A549 (cell line): ENCODE measurements at regions of chr12 and their contacts with region 1.

Region 1: DNA sequence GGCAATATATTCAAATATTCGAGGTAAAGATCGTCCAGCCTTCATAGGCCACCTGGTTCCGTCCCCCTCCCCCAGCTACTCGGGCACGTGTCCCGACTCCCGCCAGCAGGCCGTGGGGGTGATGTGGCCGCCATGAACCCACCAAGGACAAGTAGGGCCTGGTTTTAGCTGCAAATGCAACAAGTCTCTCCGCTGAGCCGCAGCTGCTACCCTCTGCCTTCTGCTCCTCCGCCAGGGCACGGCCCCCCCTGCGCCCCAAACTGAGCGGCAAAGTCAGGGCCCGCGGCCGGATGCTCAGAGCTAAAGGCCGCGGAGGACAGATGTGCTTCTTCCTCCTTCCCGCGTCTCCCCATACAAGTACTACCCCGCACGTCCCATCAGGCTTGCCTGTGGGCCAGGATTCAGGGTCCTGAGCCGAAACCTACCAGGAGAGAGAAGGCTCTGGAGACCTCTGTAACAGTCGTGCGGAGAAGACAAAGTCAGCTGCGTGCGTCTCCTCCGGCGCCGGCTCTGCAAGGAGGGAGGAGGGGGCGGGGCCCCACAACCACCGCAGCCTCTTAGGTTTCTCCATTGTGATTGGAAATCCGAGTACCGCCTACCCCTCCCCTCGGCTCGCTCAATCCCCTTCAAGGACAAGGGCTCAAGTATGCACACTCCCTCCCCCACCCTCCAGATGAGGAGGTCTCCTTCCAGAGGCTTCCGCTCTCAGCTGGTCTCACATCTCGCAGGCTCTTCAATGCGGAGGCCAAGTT is at the start of gene LDHB:
- DNase-seq: peak; percentile 86 to 98
- ATAC-seq: peak; percentile 97 to 98
- H3K4me3 ChIP-seq: peak within 1 kb of the TSS; percentile 92
- H3K27ac ChIP-seq: peak within 1 kb of the TSS; percentile 97 to 98
- H3K4me1 ChIP-seq: peaks cover 34% of the 10 kb centered on the region
- CTCF ChIP-seq: no peak
- EP300 ChIP-seq: no peak
- POLR2A ChIP-seq: peak; percentile 90
- RAD21 ChIP-seq: no peak
- polyA plus RNA-seq, gene LDHB: 1,881 and 2,260 TPM in 2 replicates

Region 2: DNA sequence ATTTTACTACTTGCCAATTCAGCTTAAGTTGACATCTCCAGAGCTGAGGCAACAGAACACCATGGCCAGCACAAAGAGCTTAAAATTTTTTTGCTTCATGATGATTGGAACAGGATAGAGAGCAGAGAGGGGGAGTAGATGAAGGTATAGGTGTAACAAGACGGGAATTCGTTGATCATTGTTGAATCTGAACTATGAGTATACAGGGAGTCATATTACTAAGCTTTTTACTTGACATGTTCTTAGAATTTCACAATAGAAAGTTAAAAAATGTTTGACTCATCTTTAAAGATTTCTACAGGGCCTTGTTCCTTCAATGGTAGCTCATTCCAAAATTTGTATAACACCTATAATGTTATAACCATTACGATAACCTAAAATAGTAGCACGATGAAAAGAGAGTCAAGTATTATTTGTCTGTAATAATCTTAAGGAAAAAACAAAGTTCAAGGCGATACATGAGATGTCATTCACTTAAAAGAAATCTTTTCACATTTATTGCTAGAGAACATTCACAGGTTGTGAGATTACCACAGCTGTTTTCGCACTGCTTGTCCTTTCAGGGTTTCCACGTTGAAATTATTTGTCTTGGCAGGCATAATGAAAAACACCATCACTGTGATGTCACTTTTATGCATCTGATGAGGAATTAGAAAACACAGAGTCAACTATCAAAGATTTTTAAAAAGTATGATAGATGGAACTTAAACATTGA is 97.5 kb before region 1 on chr12:
- CTCF ChIA-PET with region 1: no interaction called
- POLR2A ChIA-PET with region 1: interaction called, 10 read pairs
- DNase-seq: peak; percentile 19 to 74
- ATAC-seq: peak; percentile 92 to 97
- H3K4me3 ChIP-seq: no peak overlapping the region
- H3K27ac ChIP-seq: peak overlapping the region; percentile 63 to 78; a peak in 5 of 6 replicates
- H3K4me1 ChIP-seq: peaks cover 54% of the 10 kb centered on the region
- CTCF ChIP-seq: no peak
- EP300 ChIP-seq: peak in 1 of 2 experiments; percentile 49; a peak in 2 of 5 replicates
- POLR2A ChIP-seq: no peak
- RAD21 ChIP-seq: no peak; a peak in 1 of 5 replicates

Region 3: GRCh38 chr12:21631367-21631766 is 26.1 kb before region 1 on chr12:
- CTCF ChIA-PET with region 1: no interaction called
- POLR2A ChIA-PET with region 1: no interaction called
- DNase-seq: no peak
- ATAC-seq: peak; percentile 6 to 44; a peak in 2 of 6 replicates
- H3K4me3 ChIP-seq: no peak overlapping the region
- H3K27ac ChIP-seq: no peak overlapping the region
- H3K4me1 ChIP-seq: no peaks in the 10 kb centered on the region
- CTCF ChIP-seq: no peak
- EP300 ChIP-seq: no peak
- POLR2A ChIP-seq: no peak
- RAD21 ChIP-seq: no peak

Region 4: DNA sequence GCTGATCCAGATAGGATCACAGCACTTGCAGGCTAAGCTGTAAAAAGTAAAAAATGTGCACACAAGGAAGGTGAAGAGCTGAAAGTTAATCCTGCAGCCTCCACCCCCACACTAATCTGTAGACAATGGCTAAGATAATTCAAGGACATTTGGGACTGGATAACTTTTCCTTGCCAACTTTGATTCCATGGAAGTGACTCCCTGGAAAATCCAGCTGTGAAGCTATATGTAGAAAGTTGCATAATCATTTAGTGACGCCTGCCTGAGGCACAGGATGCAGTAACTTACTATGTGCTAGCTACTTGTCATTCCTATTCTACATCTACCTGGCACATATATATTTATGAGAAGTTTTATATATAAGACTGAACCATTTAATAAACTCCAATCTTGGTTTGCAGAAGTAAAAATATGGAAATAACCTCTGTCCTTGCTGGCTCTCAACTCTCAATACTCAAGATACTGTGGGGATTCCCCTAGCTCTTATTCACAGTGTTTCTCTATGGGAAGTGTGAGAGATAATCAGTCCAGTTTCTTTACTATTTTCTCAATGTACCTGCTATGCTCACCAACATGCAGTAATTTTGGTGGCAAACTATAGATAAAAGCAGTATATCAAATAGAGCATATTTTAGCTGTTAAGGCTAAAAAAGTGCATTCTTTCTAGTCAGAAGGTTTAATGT is 14.7 kb before region 1 on chr12:
- CTCF ChIA-PET with region 1: interaction called, 4 read pairs
- POLR2A ChIA-PET with region 1: interaction called, 36 read pairs
- DNase-seq: no peak
- ATAC-seq: no peak
- H3K4me3 ChIP-seq: no peak overlapping the region
- H3K27ac ChIP-seq: peak overlapping the region; percentile 53 to 69; a peak in 5 of 6 replicates
- H3K4me1 ChIP-seq: peaks cover 97% of the 10 kb centered on the region
- CTCF ChIP-seq: no peak
- EP300 ChIP-seq: no peak
- POLR2A ChIP-seq: no peak
- RAD21 ChIP-seq: no peak

Region 5: DNA sequence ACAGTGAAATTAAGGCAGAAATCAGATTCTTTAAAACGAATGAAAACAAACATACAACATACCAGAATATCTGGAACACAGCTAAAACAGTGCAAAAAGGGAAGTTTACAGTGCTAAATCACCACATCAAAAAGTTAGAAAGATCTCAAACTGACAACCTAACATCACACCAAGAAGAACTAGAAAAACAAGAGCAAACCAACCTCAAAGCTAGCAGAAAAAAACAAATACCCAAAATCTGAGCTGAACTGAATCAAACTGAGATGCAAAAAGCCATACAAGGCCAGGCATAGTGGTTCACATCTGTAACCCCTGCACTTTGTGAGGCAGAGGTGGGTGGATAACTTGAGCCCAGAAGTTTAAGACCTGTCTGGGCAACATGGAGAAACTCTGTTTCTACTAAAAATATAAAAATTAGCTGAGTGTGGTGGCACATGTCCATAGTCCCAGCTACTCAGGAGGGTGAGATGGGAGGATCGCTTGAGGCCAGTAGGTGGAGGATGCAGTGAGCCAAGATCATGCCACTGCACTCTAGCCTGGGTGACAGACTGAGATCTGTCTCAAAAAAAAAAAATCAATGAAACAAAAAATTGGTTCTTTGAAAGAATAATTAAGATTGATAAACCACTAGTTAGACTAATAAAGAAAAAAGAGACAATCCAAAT is 33.3 kb after region 1 on chr12:
- CTCF ChIA-PET with region 1: no interaction called
- POLR2A ChIA-PET with region 1: no interaction called
- DNase-seq: no peak
- ATAC-seq: no peak
- H3K4me3 ChIP-seq: no peak overlapping the region
- H3K27ac ChIP-seq: no peak overlapping the region
- H3K4me1 ChIP-seq: no peaks in the 10 kb centered on the region
- CTCF ChIP-seq: no peak
- EP300 ChIP-seq: no peak
- POLR2A ChIP-seq: no peak
- RAD21 ChIP-seq: no peak

Region 6: DNA sequence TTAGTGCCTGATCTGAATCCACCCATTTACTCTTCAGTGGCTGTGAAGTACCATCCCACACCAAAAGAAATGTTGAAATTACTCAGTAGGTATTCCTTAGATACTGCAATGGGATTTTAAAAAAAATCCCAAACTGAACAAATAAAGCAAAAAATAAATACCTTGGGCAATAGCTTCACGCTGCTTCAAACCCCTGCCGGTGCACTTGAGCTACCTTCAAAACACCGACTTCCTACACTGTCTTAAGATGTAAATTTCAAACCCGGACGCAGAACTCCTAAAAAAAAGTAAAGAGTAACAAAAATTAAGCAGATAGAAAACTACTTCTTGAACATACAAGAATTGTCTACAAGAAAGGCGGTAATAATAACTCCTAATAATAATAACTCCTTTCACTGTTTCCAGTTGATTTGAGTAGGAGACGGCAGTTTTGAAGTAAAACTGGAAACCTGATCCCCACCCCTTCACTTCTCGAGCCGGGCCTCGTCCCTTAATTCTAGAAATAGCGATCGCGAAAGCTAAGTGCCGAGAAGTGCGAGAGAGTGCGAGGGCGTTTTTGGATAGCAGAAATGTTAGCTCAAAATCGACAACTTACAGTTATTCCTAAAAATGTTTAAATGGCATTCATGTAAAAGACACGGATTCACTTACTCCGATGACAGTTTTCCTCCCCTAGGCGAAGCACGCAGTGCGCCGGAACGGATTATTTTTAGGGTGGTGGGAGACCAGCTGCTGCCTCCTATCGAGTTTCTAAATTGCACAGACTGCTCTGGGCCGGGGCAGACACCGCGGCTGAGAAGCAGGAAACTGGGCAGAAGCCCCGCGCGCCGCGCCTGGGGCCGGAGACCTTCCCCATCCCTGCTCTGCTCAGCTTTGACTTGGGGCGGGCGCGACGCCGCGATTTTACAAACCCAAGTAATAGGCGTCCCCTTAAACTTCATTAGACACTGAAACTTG is 283.3 kb after region 1 on chr12 and contains the start of gene ABCC9:
- CTCF ChIA-PET with region 1: no interaction called
- POLR2A ChIA-PET with region 1: no interaction called
- DNase-seq: no peak
- ATAC-seq: peak in 1 of 2 experiments; percentile 79; a peak in 3 of 6 replicates
- H3K4me3 ChIP-seq: peak within 1 kb of the TSS; percentile 36
- H3K27ac ChIP-seq: no peak within 1 kb of the TSS
- H3K4me1 ChIP-seq: no peaks in the 10 kb centered on the region
- CTCF ChIP-seq: no peak
- EP300 ChIP-seq: no peak
- POLR2A ChIP-seq: no peak
- RAD21 ChIP-seq: no peak
- polyA plus RNA-seq, gene ABCC9: 0.01 TPM in 2 replicates